Sigmoid colon (tissue), 7 donors: ENCODE measurements at regions of chr11 and their contacts with region 1.

Region 1: DNA sequence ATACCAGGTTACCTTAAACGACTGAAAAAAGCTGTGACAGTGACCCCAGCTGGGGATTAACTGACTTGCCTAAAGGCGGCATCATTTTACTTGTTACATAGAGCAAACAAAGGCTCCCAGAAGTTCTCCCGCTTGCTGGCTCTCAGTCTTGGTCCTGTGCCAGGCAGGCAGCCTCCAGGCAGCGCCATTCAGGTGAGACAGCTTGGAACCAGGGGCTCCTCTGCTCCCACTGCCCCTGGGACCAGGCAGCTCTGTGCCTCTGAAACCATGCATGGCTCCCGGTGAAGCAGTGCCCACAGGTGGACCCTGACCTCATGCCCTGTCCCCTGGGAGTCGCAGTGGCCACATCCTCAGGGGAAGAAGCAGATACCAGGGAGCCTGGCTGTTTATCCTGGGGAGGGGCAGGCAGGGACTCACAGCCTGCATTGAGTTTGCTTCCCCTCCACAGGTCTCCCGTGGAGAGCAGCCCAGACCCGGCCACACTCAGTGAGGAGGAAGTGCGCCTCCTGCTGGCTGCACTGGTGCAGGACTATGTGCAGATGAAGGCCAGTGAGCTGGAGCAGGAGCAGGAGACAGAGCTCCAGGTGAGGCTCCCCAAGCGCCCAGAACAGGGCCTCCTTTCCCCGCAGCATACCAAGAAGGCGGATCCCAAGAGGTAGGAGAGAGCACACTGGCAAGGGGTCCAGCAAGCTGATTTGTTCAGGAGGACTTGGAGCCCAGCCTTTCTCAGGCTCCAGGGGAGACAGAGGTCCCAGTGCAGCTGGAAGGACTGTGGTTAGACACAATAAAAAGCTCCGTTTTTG is 15.6 kb upstream of the CYP2R1 start:
- DNase-seq: peak; percentile 82
- H3K4me3 ChIP-seq: no peak overlapping the region
- H3K27ac ChIP-seq: no peak overlapping the region
- H3K4me1 ChIP-seq: peaks cover 0 to 20% (median 9%) of the 10 kb centered on the region in 4 donors
- H3K27me3 ChIP-seq: no peaks in the 10 kb centered on the region
- CTCF ChIP-seq: peak; percentile 30 to 74 (median 60)
- EP300 ChIP-seq: no peak
- POLR2A ChIP-seq: no peak

Region 2: DNA sequence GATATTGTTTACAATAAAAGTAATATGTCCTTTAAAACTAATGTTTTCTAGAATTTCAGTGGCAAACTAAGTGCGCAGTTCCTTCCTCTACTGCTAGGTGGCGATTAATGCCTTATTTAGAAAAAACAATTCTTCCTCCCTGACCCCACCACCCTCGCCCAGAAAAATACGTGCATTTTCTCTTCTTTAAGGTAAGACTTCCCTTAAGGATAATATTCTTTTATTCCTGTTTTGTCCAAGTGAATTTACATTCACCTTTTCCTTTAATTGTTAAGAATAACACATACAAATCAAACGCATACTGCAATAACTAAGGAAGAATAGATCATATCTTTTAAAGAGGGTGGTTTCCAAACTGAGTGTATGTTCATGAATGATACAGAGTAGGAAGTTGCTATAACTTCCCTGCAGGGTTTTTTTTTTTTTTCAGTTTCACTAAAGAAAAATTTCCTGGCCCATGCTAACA is 370.4 kb before region 1 on chr11:
- intact Hi-C with region 1: loop called (anchors 1 kb)
- DNase-seq: no peak
- H3K4me3 ChIP-seq: no peak overlapping the region
- H3K27ac ChIP-seq: peak overlapping the region in 3 of 4 donors; percentile 57 to 73 (median 73)
- H3K4me1 ChIP-seq: peaks cover 0 to 49% (median 46%) of the 10 kb centered on the region in 4 donors
- H3K27me3 ChIP-seq: no peaks in the 10 kb centered on the region
- CTCF ChIP-seq: peak; percentile 55 to 84 (median 72)
- EP300 ChIP-seq: no peak
- POLR2A ChIP-seq: no peak

Region 3: DNA sequence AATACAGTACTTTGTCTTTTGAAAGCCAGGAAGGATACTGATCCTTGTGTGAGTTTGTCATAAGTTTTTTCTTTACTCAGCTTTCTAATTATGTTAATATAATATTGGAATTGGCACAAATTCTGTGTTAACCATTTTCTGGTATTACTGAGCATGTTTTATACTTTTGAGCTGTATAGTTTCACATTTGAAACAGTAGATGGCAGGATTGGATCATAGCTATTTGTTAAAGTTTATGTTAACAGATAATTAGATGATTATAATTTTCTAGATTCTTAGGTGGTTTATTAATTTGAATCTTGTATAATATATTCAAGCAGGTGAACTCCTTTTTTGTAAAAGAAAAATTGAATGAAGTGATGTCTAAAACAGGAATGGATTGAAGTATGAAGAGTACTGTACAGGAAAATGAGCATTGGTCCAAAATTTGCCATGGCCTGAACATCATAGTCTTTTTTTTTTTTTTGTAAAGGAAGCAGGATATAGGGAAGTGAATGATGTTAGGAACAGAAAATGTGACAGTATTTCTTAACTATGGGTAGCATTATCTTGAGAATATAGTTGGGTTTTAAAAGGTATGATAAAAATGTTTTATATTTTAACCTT is 117.6 kb before region 1 on chr11:
- intact Hi-C with region 1: loop called (anchors 5 kb)
- DNase-seq: no peak
- H3K4me3 ChIP-seq: no peak overlapping the region
- H3K27ac ChIP-seq: no peak overlapping the region
- H3K4me1 ChIP-seq: peaks cover 0 to 3% (median 0%) of the 10 kb centered on the region in 4 donors
- H3K27me3 ChIP-seq: no peaks in the 10 kb centered on the region
- CTCF ChIP-seq: peak in 1 of 4 experiments; percentile 22
- EP300 ChIP-seq: no peak
- POLR2A ChIP-seq: no peak

Region 4: GRCh38 chr11:14942745-14943144 is 35.1 kb after region 1 on chr11:
- intact Hi-C with region 1: no loop called
- DNase-seq: no peak
- H3K4me3 ChIP-seq: no peak overlapping the region
- H3K27ac ChIP-seq: no peak overlapping the region
- H3K4me1 ChIP-seq: no peaks in the 10 kb centered on the region
- H3K27me3 ChIP-seq: no peaks in the 10 kb centered on the region
- CTCF ChIP-seq: no peak
- EP300 ChIP-seq: no peak
- POLR2A ChIP-seq: no peak

Region 5: GRCh38 chr11:15074206-15075161 is 166.9 kb after region 1 on chr11:
- intact Hi-C with region 1: loop called (anchors 1 kb)
- DNase-seq: peak; percentile 87
- H3K4me3 ChIP-seq: peak overlapping the region in 3 of 4 donors; percentile 20 to 46 (median 37)
- H3K27ac ChIP-seq: no peak overlapping the region
- H3K4me1 ChIP-seq: peaks cover 0 to 22% (median 20%) of the 10 kb centered on the region in 4 donors
- H3K27me3 ChIP-seq: peaks cover 11 to 48% (median 27%) of the 10 kb centered on the region in 3 donors
- CTCF ChIP-seq: peak; percentile 18 to 75 (median 60)
- EP300 ChIP-seq: no peak
- POLR2A ChIP-seq: no peak

Region 6: DNA sequence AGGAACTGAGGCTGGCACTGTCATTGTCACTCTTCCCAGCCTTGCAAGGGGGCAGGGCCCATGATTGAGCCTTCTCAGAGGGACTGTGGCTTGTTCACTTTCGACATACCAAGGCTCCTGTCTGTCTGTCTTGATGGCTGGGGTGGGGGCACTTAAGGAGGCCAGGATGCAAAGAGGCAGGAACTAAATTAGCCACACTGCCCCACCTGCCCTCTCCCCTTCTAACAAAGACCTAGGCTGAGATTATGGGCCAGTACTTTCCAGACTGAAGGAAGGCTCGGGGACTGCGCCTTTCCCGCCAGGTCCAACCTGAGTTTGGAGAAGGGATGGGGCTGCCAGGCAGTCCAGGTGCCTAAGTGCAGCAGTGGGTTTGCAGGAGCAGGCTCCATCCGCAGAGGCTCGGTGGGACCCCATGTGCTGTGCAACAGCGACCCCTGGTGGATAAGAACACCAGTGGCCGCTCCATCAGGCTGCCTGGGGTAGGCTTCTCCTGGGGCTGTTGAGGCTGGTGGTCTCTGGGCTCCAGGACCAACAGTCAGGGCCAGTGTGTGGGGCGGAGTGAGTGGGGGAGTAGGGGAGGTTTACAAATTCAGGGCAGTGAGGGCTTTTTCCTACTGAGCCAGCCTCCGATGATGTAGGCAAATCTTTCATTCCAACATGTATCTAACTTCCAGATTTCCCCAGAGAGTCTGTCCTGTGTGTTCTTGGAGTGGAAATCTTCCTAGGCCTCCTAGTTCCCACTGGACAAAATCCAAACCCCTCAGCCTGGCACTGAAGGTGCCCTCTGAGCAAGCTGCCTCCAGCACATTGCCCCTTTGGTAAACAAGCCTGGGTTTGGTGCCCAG is 301.0 kb after region 1 on chr11:
- intact Hi-C with region 1: loop called (anchors 2 kb)
- DNase-seq: peak; percentile 84
- H3K4me3 ChIP-seq: no peak overlapping the region
- H3K27ac ChIP-seq: no peak overlapping the region
- H3K4me1 ChIP-seq: no peaks in the 10 kb centered on the region
- H3K27me3 ChIP-seq: peaks cover 0 to 6% (median 0%) of the 10 kb centered on the region in 3 donors
- CTCF ChIP-seq: peak; percentile 42 to 94 (median 88)
- EP300 ChIP-seq: no peak
- POLR2A ChIP-seq: no peak